Common myeloid progenitor, CD34-positive (primary cell): ENCODE measurements at regions of chr19 and their contacts with region 1.

Region 1: DNA sequence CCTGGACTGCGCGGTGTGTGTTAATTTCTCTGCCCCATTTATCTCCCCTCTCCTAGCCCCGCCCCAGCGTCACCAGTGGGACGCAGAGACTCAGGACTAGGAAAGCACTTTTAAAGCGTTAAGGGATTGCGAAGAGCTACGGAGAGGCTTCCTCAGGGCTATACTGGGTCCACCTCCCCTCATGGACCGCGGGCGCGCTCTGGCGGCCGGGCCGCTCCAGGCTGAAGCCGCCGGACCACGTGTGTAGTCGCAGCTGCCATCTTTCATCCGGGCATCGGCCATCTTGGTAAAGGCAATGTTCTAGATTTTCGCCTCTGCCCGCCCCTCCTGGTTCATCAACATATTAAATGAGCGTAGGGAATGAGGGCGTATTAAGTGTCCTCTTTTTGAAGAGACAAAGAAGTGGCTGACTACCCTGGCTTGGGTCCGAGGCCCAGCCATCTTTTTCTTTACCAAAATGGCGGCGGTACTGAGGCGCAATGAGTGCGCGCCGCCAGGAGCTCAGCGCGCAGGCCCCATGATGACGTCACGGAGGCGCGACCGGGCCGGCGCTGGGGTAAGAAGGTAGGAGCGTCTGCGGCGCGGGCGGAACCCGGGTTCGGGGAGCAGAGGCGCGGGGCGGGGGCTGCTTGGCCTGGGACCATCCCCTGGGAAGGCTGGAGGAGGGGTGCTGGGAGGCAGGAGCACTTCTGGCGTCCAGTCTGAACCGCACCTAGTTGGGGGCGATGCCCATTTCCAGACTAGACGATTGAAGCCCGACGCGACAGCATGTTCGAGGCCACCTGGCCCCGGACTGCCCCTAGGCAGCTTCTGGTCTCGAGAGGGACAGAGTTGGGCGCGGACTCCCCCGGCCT is at the start of gene CCDC124:
- DNase-seq: peak; percentile 95 to 97 (median 96)
- H3K4me3 ChIP-seq: peak within 1 kb of the TSS; percentile 80 to 96 (median 85)
- H3K27ac ChIP-seq: peak within 1 kb of the TSS; percentile 95 to 98
- H3K4me1 ChIP-seq: peaks cover 5 to 17% (median 16%) of the 10 kb centered on the region in 4 experiments
- H3K27me3 ChIP-seq: no peaks in the 10 kb centered on the region

Region 2: GRCh38 chr19:17865364-17866311 is 67.1 kb before region 1 on chr19:
- CTCF ChIA-PET with region 1: interaction called, 63 read pairs
- POLR2A ChIA-PET with region 1: interaction called, 5 read pairs
- DNase-seq: no peak
- H3K4me3 ChIP-seq: no peak overlapping the region
- H3K27ac ChIP-seq: peak overlapping the region in 1 of 2 experiments; percentile 40
- H3K4me1 ChIP-seq: peaks cover 4 to 13% (median 12%) of the 10 kb centered on the region in 4 experiments
- H3K27me3 ChIP-seq: no peaks in the 10 kb centered on the region

Region 3: DNA sequence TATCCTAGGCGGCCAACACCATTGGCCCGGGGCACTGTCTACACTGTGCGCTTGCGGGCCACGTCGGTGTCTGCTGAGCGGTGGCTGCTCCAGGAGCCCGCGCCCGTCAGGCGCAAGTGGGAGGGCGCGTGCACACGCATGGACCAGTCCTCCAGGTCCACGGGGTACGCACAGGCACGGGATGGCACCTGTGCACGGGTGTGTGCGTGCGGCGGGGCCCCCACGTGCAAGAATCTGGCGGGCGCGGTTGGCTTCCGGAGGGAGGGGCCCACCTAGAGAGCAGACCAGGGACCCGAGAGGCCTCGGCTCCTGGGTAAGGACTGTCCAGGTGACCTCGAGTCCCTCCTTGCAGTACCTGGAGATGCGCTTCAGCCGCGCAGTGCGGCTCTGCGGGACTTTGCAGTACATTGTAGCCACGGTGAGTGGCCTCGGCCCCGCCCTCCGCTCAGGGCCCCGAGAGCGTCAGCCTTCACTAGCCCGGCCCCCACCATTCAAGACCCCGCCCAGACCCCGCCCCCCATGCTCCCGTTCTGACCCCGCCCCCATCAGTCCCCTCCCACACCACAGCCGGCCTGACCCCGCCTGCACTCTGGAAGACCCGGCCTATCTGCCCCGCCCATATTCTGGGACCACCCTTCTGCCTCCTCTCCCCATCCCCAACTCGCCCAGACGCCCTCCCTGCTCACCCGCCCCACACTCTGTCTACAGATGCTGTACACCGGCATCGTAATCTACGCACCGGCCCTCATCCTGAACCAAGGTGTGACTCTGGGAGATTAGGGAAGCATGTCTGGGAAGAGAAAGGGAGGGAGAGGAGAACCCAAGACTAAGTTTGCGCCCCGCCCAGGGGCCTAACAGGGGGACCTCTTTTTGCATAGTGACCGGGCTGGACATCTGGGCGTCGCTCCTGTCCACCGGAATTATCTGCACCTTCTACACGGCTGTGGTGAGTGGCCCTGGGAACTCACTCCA is 58.6 kb before region 1 on chr19:
- CTCF ChIA-PET with region 1: interaction called, 36 read pairs
- POLR2A ChIA-PET with region 1: interaction called, 5 read pairs
- DNase-seq: peak; percentile 70 to 77 (median 75)
- H3K4me3 ChIP-seq: peak overlapping the region in 6 of 7 experiments; percentile 13 to 69 (median 56)
- H3K27ac ChIP-seq: no peak overlapping the region
- H3K4me1 ChIP-seq: peaks cover 0 to 27% (median 18%) of the 10 kb centered on the region in 4 experiments
- H3K27me3 ChIP-seq: peaks cover 0 to 20% (median 8%) of the 10 kb centered on the region in 5 experiments

Region 4: GRCh38 chr19:17947815-17948513 is 15.3 kb after region 1 on chr19:
- CTCF ChIA-PET with region 1: interaction called, 35 read pairs
- POLR2A ChIA-PET with region 1: no interaction called
- DNase-seq: peak; percentile 92 to 96 (median 96)
- H3K4me3 ChIP-seq: peak overlapping the region in 5 of 7 experiments; percentile 41 to 79 (median 66)
- H3K27ac ChIP-seq: no peak overlapping the region
- H3K4me1 ChIP-seq: peaks cover 3 to 55% (median 54%) of the 10 kb centered on the region in 4 experiments
- H3K27me3 ChIP-seq: peaks cover 0 to 44% (median 24%) of the 10 kb centered on the region in 5 experiments

Region 5: GRCh38 chr19:18000935-18001778 is 68.4 kb after region 1 on chr19:
- CTCF ChIA-PET with region 1: interaction called, 209 read pairs
- POLR2A ChIA-PET with region 1: interaction called, 3 read pairs
- DNase-seq: peak; percentile 92 to 96 (median 94)
- H3K4me3 ChIP-seq: peak overlapping the region; percentile 55 to 83 (median 75)
- H3K27ac ChIP-seq: peak overlapping the region; percentile 33 to 82
- H3K4me1 ChIP-seq: peaks cover 0 to 29% (median 23%) of the 10 kb centered on the region in 4 experiments
- H3K27me3 ChIP-seq: no peaks in the 10 kb centered on the region